ENCODE measurements at regions of chr11 and their contacts with region 1.

Region 1: GRCh38 chr11:113896156-113896879 is 8.3 kb upstream of the HTR3B start:
- DNase-seq: peak; percentile 37
- ATAC-seq: peak; percentile 80
- H3K4me3 Mint-ChIP-seq: no peak overlapping the region
- H3K27ac Mint-ChIP-seq: no peak overlapping the region
- H3K4me1 Mint-ChIP-seq: peaks cover 26% of the 10 kb centered on the region
- H3K27me3 Mint-ChIP-seq: no peaks in the 10 kb centered on the region
- CTCF ChIP-seq: peak; percentile 49; the same call in 1 of the 2 replicates

Region 2: GRCh38 chr11:113697756-113698407 is 198.4 kb before region 1 on chr11:
- CTCF ChIA-PET with region 1: no interaction called
- POLR2A ChIA-PET with region 1: no interaction called
- DNase-seq: no peak
- ATAC-seq: no peak
- H3K4me3 Mint-ChIP-seq: no peak overlapping the region
- H3K27ac Mint-ChIP-seq: no peak overlapping the region
- H3K4me1 Mint-ChIP-seq: peaks cover 5% of the 10 kb centered on the region
- H3K27me3 Mint-ChIP-seq: no peaks in the 10 kb centered on the region; the same call in 1 of the 2 replicates
- CTCF ChIP-seq: no peak

Region 3: GRCh38 chr11:113752932-113753331 is 143.4 kb before region 1 on chr11:
- CTCF ChIA-PET with region 1: no interaction called
- POLR2A ChIA-PET with region 1: no interaction called
- DNase-seq: no peak
- ATAC-seq: no peak
- H3K4me3 Mint-ChIP-seq: no peak overlapping the region
- H3K27ac Mint-ChIP-seq: no peak overlapping the region
- H3K4me1 Mint-ChIP-seq: no peaks in the 10 kb centered on the region
- H3K27me3 Mint-ChIP-seq: no peaks in the 10 kb centered on the region
- CTCF ChIP-seq: no peak

Region 4: DNA sequence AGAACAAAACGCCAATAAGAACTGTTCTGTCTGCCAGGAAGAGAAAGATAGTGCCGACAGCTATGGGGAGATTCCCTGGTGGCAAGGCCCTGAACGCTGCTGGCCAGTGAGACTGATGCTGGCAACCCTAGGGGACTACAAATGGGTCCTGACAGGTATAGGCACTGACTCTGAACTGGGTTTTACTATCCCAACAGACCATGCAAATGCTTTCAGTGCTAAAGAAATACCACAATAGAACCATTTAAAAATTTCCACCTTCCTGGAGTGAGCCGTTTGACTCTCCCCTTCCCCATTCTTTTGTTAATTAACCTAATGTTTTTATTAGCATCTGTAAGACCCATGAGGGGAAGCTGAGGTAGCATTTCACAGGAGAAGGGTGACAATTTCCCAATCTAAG is 46.6 kb before region 1 on chr11:
- CTCF ChIA-PET with region 1: interaction called, 14 read pairs
- POLR2A ChIA-PET with region 1: interaction called, 3 read pairs
- DNase-seq: peak; percentile 41
- ATAC-seq: peak; percentile 97
- H3K4me3 Mint-ChIP-seq: peak overlapping the region; percentile 10
- H3K27ac Mint-ChIP-seq: peak overlapping the region; percentile 97
- H3K4me1 Mint-ChIP-seq: peaks cover 72% of the 10 kb centered on the region
- H3K27me3 Mint-ChIP-seq: no peaks in the 10 kb centered on the region
- CTCF ChIP-seq: no peak

Region 5: DNA sequence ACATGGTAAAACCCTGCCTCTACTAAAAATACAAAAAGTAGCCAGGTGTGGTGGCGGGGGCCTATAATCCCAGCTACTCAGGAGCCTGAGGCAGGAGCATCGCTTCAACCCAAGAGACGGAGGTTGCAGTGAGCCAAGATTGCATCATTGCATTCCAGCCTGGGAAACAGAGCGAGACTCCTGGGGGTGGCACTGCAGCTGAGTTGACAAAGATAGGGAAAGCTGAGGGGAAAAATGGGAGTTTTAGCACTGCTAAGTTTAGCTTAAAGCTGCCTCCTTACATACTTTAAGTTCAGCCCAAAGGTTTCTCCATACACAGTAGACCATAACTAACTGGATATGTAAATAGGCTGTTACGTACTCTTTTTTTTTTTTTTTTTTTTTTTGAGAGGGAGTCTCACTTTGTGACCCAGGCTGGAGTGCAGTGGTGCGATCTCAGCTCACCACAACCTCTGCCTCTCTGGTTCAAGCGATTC is 11.9 kb before region 1 on chr11:
- CTCF ChIA-PET with region 1: interaction called, 25 read pairs
- POLR2A ChIA-PET with region 1: no interaction called
- DNase-seq: peak; percentile 59
- ATAC-seq: peak; percentile 81
- H3K4me3 Mint-ChIP-seq: no peak overlapping the region
- H3K27ac Mint-ChIP-seq: peak overlapping the region; percentile 70
- H3K4me1 Mint-ChIP-seq: peaks cover 21% of the 10 kb centered on the region
- H3K27me3 Mint-ChIP-seq: no peaks in the 10 kb centered on the region; the same call in 1 of the 2 replicates
- CTCF ChIP-seq: no peak

Region 6: GRCh38 chr11:113952588-113952987 is 56.3 kb after region 1 on chr11:
- CTCF ChIA-PET with region 1: interaction called, 10 read pairs
- POLR2A ChIA-PET with region 1: interaction called, 5 read pairs
- DNase-seq: no peak
- ATAC-seq: no peak
- H3K4me3 Mint-ChIP-seq: no peak overlapping the region
- H3K27ac Mint-ChIP-seq: no peak overlapping the region
- H3K4me1 Mint-ChIP-seq: peaks cover 59% of the 10 kb centered on the region
- H3K27me3 Mint-ChIP-seq: 0 out of 2 replicates have a peak, but pooled peaks cover 3% of the 10 kb centered on the region
- CTCF ChIP-seq: no peak

Region 7: DNA sequence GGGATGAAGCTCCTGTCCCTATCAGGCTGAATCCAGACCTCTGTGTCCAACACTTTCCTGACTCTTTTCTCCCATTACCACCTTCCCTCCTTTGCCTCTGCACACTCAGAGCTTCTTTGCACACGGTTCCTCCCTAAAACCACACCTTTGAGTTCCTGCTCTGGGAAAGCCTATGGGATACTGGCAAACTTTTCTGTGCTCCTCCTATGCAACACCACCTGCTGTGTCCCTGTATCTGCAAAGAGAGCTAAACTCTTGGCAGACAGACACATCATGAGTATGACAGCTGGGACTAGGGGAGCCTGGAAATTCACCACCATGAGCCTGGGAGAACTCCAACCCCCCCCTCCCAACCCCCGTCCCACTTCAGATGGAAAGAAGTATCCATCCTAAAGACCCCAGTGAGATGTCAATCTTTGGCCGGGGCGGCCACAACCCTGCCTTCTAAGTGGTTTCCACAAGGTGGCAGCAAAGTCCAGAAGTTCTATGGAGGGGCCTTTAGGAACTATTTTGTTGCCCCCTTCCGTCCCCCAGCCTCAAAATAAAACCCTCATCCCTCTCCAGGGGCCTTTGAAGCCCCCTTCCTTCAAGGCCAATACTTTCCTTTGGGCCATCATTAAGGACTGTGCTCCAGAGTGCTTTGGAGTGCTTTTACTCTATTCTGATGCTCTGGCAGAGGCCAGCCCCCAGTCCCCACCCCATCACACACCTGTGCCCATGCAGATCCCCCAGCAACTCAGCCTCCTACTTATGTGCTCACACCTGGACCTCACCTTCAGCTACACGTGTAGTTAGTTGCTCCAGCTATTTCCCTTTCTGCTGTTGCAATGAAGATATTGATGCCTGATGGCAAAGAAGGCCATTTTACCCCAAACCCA is 98.0 kb after region 1 on chr11:
- CTCF ChIA-PET with region 1: interaction called, 64 read pairs
- POLR2A ChIA-PET with region 1: no interaction called
- DNase-seq: peak; percentile 73
- ATAC-seq: peak; percentile 68
- H3K4me3 Mint-ChIP-seq: no peak overlapping the region
- H3K27ac Mint-ChIP-seq: no peak overlapping the region; the same call in 1 of the 2 replicates
- H3K4me1 Mint-ChIP-seq: peaks cover 21% of the 10 kb centered on the region
- H3K27me3 Mint-ChIP-seq: no peaks in the 10 kb centered on the region
- CTCF ChIP-seq: peak; percentile 83

Region 8: GRCh38 chr11:114044042-114044871 is 147.9 kb after region 1 on chr11:
- CTCF ChIA-PET with region 1: interaction called, 11 read pairs
- POLR2A ChIA-PET with region 1: no interaction called
- DNase-seq: no peak
- ATAC-seq: peak; percentile 74
- H3K4me3 Mint-ChIP-seq: no peak overlapping the region
- H3K27ac Mint-ChIP-seq: no peak overlapping the region
- H3K4me1 Mint-ChIP-seq: peaks cover 15% of the 10 kb centered on the region
- H3K27me3 Mint-ChIP-seq: no peaks in the 10 kb centered on the region; the same call in 1 of the 2 replicates
- CTCF ChIP-seq: no peak

Region 9: DNA sequence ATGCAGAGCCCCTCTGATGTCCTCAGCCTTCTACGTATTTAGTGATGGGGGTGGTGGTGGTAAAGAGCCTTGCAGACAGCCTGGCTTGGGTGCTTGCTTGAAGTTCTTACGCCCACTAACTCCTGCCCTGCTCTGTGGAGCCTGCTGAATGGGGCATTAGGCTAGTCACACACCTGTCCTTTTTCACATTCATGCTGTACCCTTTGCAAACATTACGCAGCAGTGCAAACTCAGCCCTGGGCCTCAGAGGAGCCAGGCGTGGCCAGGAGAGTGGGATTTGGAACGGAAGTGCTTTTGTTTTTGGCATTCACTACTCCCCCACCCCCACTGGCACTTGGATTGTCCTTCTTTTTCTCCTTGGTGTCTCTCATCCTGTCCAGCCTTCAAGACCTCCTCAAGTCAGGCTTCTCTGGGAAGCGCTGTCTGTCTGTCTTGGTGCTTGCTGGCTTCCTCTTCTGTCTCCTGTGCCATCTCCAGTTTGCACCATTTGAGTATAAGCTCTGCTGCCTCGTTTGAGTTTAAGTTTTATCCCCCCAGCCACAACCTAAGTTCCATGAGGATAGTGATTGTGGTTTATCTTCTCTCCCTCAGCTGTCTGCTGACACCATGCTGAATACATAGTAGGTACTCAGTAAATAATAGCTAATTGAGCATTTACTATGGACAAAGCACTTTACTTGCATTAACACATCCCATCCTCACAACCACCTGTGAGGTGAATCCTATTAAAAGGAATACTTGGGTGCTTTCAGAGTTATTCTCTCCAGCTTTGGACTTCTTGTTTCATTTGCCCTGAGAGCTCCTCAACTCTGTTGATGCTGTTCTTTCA is 189.9 kb after region 1 on chr11:
- CTCF ChIA-PET with region 1: no interaction called
- POLR2A ChIA-PET with region 1: no interaction called
- DNase-seq: no peak
- ATAC-seq: no peak
- H3K4me3 Mint-ChIP-seq: no peak overlapping the region
- H3K27ac Mint-ChIP-seq: no peak overlapping the region
- H3K4me1 Mint-ChIP-seq: peaks cover 8% of the 10 kb centered on the region; the same call in 1 of the 2 replicates
- H3K27me3 Mint-ChIP-seq: peaks cover 11% of the 10 kb centered on the region
- CTCF ChIP-seq: no peak

Region 10: GRCh38 chr11:114262681-114263512 is 366.6 kb after region 1 on chr11:
- CTCF ChIA-PET with region 1: interaction called, 74 read pairs
- POLR2A ChIA-PET with region 1: interaction called, 3 read pairs
- DNase-seq: peak; percentile 34
- ATAC-seq: peak; percentile 74
- H3K4me3 Mint-ChIP-seq: no peak overlapping the region
- H3K27ac Mint-ChIP-seq: no peak overlapping the region
- H3K4me1 Mint-ChIP-seq: no peaks in the 10 kb centered on the region
- H3K27me3 Mint-ChIP-seq: no peaks in the 10 kb centered on the region
- CTCF ChIP-seq: no peak